HEK293 (cell line): ENCODE measurements at regions of chr9 and their contacts with region 1.

Region 1: DNA sequence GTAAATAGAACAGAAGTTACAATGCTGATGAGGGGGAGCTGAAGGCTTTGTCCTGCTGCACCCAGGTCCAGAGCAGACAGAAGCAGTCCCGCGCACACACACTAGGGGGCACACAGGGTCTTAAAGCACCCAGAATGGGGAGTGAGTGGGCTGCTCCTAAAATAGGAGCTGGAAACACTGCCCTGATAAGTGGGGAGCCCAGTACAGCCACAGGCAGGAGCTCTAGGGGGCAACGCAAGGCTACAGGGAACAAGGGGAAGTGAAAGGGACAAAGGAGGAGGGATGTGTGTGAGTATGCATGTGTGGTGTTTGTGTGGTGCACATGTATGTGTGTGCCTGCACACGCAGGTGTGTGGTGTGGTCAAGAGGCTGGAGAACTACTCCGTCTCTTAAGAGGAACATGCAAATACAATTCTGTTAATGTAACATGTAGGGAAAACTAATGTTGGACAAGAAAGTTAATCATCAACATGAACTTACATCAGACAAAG is 191.5 kb downstream of the ROR2 start:
- H3K4me3 ChIP-seq: no peak overlapping the region
- H3K27ac ChIP-seq: no peak overlapping the region
- H3K4me1 ChIP-seq: no peaks in the 10 kb centered on the region
- CTCF ChIP-seq: no peak

Region 2: GRCh38 chr9:91604451-91605179 is 153.9 kb before region 1 on chr9:
- CTCF ChIA-PET with region 1: no interaction called
- POLR2A ChIA-PET with region 1: no interaction called
- H3K4me3 ChIP-seq: no peak overlapping the region
- H3K27ac ChIP-seq: no peak overlapping the region
- H3K4me1 ChIP-seq: no peaks in the 10 kb centered on the region
- CTCF ChIP-seq: no peak

Region 3: GRCh38 chr9:91734371-91734981 is 24.1 kb before region 1 on chr9:
- CTCF ChIA-PET with region 1: interaction called, 18 read pairs
- POLR2A ChIA-PET with region 1: no interaction called
- H3K4me3 ChIP-seq: no peak overlapping the region
- H3K27ac ChIP-seq: no peak overlapping the region
- H3K4me1 ChIP-seq: no peaks in the 10 kb centered on the region
- CTCF ChIP-seq: peak; percentile 71

Region 4: GRCh38 chr9:91775011-91775707 is 16.6 kb after region 1 on chr9:
- CTCF ChIA-PET with region 1: interaction called, 19 read pairs
- POLR2A ChIA-PET with region 1: no interaction called
- H3K4me3 ChIP-seq: no peak overlapping the region
- H3K27ac ChIP-seq: no peak overlapping the region
- H3K4me1 ChIP-seq: no peaks in the 10 kb centered on the region
- CTCF ChIP-seq: peak; percentile 77

Region 5: GRCh38 chr9:91978739-91979414 is 220.3 kb after region 1 on chr9:
- CTCF ChIA-PET with region 1: interaction called, 15 read pairs
- POLR2A ChIA-PET with region 1: no interaction called
- H3K4me3 ChIP-seq: no peak overlapping the region
- H3K27ac ChIP-seq: no peak overlapping the region
- H3K4me1 ChIP-seq: no peaks in the 10 kb centered on the region
- CTCF ChIP-seq: no peak; the same call in 1 of the 2 replicates

Region 6: GRCh38 chr9:92077888-92078287 is 319.4 kb after region 1 on chr9:
- CTCF ChIA-PET with region 1: no interaction called
- POLR2A ChIA-PET with region 1: no interaction called
- H3K4me3 ChIP-seq: no peak overlapping the region
- H3K27ac ChIP-seq: no peak overlapping the region
- H3K4me1 ChIP-seq: no peaks in the 10 kb centered on the region
- CTCF ChIP-seq: no peak